ENCODE measurements at regions of chr6 and their contacts with region 1.

Region 1: GRCh38 chr6:121055572-121056163 is 278.6 kb downstream of the TBC1D32 start:
- DNase-seq: no peak
- H3K4me3 ChIP-seq: no peak overlapping the region
- H3K27ac ChIP-seq: no peak overlapping the region
- H3K4me1 ChIP-seq: no peaks in the 10 kb centered on the region
- H3K27me3 ChIP-seq: no peaks in the 10 kb centered on the region
- CTCF ChIP-seq: peak; percentile 53

Region 2: DNA sequence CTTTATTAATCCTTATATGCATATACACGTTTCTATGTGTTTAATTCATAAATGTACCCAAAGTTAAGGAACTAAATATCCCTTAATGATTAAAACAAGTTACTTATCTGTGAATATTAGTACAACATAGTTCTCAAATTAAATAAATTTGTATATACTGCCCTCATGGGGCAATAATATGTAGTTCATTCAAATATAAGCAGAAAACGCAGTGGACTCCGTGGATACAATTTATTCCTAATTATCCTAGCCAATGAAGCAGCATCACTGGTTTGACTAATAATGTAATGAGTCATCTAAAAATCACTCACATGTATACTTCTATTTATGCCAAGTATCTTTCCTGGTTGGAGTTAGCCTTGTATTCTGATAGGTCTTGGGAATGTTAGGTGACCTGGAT is 167.0 kb after region 1 on chr6:
- intact Hi-C with region 1: loop called (anchors 10 kb)
- DNase-seq: no peak
- H3K4me3 ChIP-seq: no peak overlapping the region
- H3K27ac ChIP-seq: no peak overlapping the region
- H3K4me1 ChIP-seq: no peaks in the 10 kb centered on the region
- H3K27me3 ChIP-seq: no peaks in the 10 kb centered on the region
- CTCF ChIP-seq: no peak

Region 3: GRCh38 chr6:121305957-121306607 is 250.4 kb after region 1 on chr6:
- intact Hi-C with region 1: loop called (anchors 2 kb)
- DNase-seq: no peak
- H3K4me3 ChIP-seq: no peak overlapping the region
- H3K27ac ChIP-seq: no peak overlapping the region
- H3K4me1 ChIP-seq: no peaks in the 10 kb centered on the region
- H3K27me3 ChIP-seq: no peaks in the 10 kb centered on the region
- CTCF ChIP-seq: peak; percentile 45

Region 4: GRCh38 chr6:121399966-121400365 is 344.3 kb after region 1 on chr6:
- intact Hi-C with region 1: loop called (anchors 5 kb)
- DNase-seq: no peak
- H3K4me3 ChIP-seq: no peak overlapping the region
- H3K27ac ChIP-seq: peak overlapping the region; percentile 24
- H3K4me1 ChIP-seq: no peaks in the 10 kb centered on the region
- H3K27me3 ChIP-seq: no peaks in the 10 kb centered on the region
- CTCF ChIP-seq: no peak